ENCODE measurements at regions of chr5 and their contacts with region 1.

Region 1: DNA sequence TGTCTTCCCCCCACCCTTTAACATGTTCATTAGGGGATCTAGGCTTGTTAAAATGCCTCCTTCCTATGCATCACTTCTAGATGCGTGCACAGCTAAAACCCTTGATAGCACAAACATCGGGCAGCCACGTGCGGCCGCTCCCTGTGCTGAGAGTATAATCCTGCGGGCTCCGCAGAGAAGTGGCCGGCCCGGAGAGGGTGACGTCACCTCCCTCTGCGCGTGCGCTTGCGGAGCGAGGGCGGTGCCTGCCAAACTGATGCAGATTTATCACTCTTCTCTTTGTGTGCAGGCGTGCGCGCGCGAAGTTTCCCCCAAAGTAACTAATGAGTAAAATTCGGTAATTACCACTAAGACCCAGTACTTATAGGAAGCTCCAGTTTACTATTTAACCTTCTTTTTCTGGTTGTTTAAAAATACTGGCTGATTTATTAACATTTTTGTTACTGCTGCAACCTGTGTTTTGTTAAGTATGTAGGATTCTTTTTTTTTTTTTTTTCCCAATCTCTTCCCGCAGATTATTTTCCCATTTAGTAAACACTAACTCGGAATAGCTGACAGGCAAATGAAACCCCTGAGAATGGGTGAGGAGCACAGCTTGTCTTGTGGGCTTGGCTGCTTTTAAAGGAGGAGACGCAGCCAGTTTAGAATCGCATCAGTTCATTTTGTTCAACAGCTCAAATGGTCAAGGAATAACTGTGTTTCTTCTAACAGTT is 121.6 kb downstream of the TRIO start:
- DNase-seq: peak; percentile 95
- ATAC-seq: peak; percentile 97
- H3K4me3 ChIP-seq: peak overlapping the region; percentile 12
- H3K27ac ChIP-seq: no peak overlapping the region
- H3K4me1 ChIP-seq: peaks cover 37% of the 10 kb centered on the region
- H3K27me3 ChIP-seq: no peaks in the 10 kb centered on the region
- CTCF ChIP-seq: no peak

Region 2: GRCh38 chr5:13994621-13995253 is 270.0 kb before region 1 on chr5:
- intact Hi-C with region 1: loop called (anchors 10 kb)
- DNase-seq: no peak
- ATAC-seq: no peak
- H3K4me3 ChIP-seq: no peak overlapping the region
- H3K27ac ChIP-seq: no peak overlapping the region
- H3K4me1 ChIP-seq: no peaks in the 10 kb centered on the region
- H3K27me3 ChIP-seq: no peaks in the 10 kb centered on the region
- CTCF ChIP-seq: no peak

Region 3: DNA sequence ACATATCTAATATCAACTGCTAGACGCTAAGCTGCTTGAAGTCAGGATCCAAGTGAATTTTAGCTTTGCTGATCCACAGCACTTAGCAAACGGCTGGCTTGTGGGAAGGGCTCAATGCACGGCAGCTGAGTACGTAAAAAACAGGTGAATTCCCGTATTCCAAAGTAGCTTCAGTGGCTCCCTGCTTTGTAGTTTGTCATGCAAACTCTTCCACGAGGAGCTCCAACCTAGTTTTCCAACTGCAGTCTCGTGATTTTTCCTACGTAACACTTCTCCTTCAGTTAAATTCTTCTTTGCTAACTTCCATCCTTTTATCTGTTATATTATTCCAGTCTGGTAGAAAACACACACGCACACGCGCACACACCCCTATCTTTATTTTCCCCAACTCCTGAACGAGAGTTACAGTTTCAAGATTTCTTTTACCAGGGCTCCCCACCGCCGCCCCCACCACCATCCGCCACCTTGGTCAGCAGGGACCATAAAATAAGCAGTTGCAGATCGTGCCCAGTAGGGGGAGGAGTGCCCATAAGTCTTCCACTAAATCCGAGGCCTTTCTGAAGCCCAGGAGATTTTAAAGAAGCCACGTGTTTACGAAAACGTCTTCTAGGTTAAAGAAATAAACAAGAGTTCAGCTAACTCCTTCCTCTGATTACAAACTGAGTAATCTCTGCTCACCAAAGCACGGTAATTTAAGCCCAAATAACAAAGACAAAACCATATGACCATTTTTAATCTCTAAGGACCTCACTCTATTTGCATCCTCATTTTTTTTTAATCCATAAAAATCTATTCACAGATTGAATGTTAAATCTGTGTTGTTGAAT is 156.4 kb before region 1 on chr5:
- intact Hi-C with region 1: loop called (anchors 5 kb)
- DNase-seq: no peak
- ATAC-seq: peak; percentile 95
- H3K4me3 ChIP-seq: peak overlapping the region; percentile 23
- H3K27ac ChIP-seq: no peak overlapping the region
- H3K4me1 ChIP-seq: peaks cover 18% of the 10 kb centered on the region
- H3K27me3 ChIP-seq: no peaks in the 10 kb centered on the region
- CTCF ChIP-seq: peak; percentile 67

Region 4: DNA sequence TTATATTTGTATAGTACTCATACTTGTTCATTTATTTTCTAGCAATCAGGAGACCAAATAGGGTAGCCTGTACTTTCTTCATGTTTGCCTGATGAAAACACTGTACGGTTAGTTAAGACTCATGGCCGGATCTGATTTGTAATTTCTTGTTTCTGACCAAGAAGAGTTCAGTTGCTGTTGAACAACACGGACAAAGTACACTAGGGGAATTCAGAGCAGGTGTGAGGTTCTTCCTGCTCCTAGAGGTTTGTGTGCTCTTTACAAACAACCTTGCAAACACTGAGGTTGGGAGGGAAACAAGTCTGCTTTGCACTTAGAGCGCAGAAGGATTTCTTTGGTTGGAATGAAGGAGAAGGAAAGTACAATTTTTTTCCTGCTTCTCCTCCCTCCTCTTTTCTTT is 51.9 kb before region 1 on chr5:
- intact Hi-C with region 1: no loop called
- DNase-seq: no peak
- ATAC-seq: peak; percentile 38
- H3K4me3 ChIP-seq: no peak overlapping the region
- H3K27ac ChIP-seq: peak overlapping the region; percentile 11
- H3K4me1 ChIP-seq: peaks cover 50% of the 10 kb centered on the region
- H3K27me3 ChIP-seq: no peaks in the 10 kb centered on the region
- CTCF ChIP-seq: no peak

Measured in upper lobe of right lung (tissue), 1 donor.